ENCODE measurements at regions of chr2 and their contacts with region 1.

Region 1: GRCh38 chr2:200306196-200306930 is at the start of gene SPATS2L:
- DNase-seq: peak in 7 of 9 donors; percentile 12 to 36 (median 22)
- ATAC-seq: peak; percentile 58
- H3K4me3 ChIP-seq: peak within 1 kb of the TSS; percentile 63
- H3K4me3 Mint-ChIP-seq: peak within 1 kb of the TSS; percentile 86 to 96 (median 92)
- H3K27ac ChIP-seq: no peak within 1 kb of the TSS
- H3K27ac Mint-ChIP-seq: peak within 1 kb of the TSS in 7 of 9 donors; percentile 14 to 88 (median 63)
- H3K4me1 ChIP-seq: peaks cover 0 to 4% of the 10 kb centered on the region in 2 donors
- H3K4me1 Mint-ChIP-seq: peaks cover 7 to 32% (median 11%) of the 10 kb centered on the region in 7 donors
- H3K27me3 ChIP-seq: no peaks in the 10 kb centered on the region
- H3K27me3 Mint-ChIP-seq: peaks cover 0 to 58% (median 16%) of the 10 kb centered on the region in 5 donors
- total RNA-seq, gene SPATS2L: 2.3 to 51.9 (median 3.5) TPM

Region 2: DNA sequence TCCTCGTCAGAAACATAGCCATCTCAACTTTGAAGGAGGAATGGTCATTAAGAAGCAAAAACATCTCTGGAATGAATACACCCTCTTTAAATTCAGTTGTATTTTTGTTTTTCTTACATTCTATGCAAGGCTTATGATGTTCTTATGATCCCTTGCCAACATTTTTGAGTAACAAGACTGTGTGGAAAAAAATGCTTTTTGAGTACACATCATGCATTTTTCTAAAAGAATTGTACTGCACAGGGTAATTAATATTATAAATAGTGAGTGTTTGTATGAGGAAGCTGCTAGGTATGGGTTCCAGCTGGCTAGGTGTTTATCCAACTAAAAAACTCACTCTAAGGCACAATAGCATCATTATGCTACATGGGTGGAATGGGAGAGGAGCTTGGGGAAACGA is 58.9 kb before region 1 on chr2:
- CTCF ChIA-PET with region 1: no interaction called
- POLR2A ChIA-PET with region 1: no interaction called
- intact Hi-C with region 1: no loop called
- DNase-seq: no peak
- ATAC-seq: no peak
- H3K4me3 ChIP-seq: no peak overlapping the region
- H3K4me3 Mint-ChIP-seq: no peak overlapping the region
- H3K27ac ChIP-seq: no peak overlapping the region
- H3K27ac Mint-ChIP-seq: no peak overlapping the region
- H3K4me1 ChIP-seq: no peaks in the 10 kb centered on the region
- H3K4me1 Mint-ChIP-seq: peaks cover 0 to 5% (median 0%) of the 10 kb centered on the region in 7 donors
- H3K27me3 ChIP-seq: no peaks in the 10 kb centered on the region
- H3K27me3 Mint-ChIP-seq: peaks cover 0 to 42% (median 4%) of the 10 kb centered on the region in 5 donors

Region 3: GRCh38 chr2:200383383-200384110 is 77.2 kb after region 1 on chr2:
- CTCF ChIA-PET with region 1: no interaction called
- POLR2A ChIA-PET with region 1: no interaction called
- intact Hi-C with region 1: loop called in 1 of 2 experiments (anchors 2 kb)
- DNase-seq: peak in 7 of 9 donors; percentile 14 to 56 (median 40)
- ATAC-seq: peak; percentile 77
- H3K4me3 ChIP-seq: peak overlapping the region; percentile 12
- H3K4me3 Mint-ChIP-seq: peak overlapping the region; percentile 13 to 84 (median 66)
- H3K27ac ChIP-seq: no peak overlapping the region
- H3K27ac Mint-ChIP-seq: peak overlapping the region; percentile 2 to 98 (median 88)
- H3K4me1 ChIP-seq: peaks cover 0 to 6% of the 10 kb centered on the region in 2 donors
- H3K4me1 Mint-ChIP-seq: peaks cover 12 to 58% (median 20%) of the 10 kb centered on the region in 7 donors
- H3K27me3 ChIP-seq: no peaks in the 10 kb centered on the region
- H3K27me3 Mint-ChIP-seq: no peaks in the 10 kb centered on the region

Region 4: DNA sequence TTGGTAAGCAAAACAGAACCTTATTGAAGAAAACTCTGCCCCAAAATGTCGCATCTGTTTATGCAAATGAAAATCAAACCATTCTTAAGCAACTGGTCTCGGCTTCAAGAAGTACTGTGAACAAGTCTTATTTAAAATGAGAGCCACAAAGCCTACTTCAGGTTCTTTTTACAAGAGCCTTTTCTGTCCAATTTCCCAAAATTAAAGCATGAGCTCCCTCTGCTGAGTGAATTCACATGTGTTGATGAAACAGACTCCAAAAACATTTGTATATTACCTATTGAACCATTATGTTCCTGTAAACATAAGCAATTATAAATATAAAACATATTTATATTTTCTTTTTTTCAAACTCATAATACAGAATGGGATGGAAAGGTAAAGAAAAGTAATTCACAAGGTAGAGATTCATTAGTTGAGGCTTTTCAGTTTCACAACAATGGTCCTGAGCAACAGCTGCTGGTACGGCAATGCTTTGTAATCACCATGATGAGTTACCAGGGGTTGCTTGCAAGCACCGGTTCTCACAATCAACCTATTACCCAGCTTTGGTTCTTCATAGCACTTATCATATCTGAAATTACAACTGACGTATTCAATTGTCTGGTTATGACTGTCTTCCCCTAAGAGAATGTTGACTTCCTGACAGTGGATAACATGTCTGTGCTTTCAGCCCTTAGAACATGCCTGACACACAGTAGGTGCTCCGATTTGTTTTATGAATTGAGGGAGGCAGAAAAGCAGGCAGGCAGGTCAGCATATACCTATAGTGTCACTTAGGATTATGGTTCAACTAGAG is 397.0 kb after region 1 on chr2:
- CTCF ChIA-PET with region 1: no interaction called
- POLR2A ChIA-PET with region 1: no interaction called
- intact Hi-C with region 1: loop called in 1 of 2 experiments (anchors 10 kb)
- DNase-seq: peak in 4 of 9 donors; percentile 9 to 35 (median 28)
- ATAC-seq: peak; percentile 6
- H3K4me3 ChIP-seq: no peak overlapping the region
- H3K4me3 Mint-ChIP-seq: peak overlapping the region in 1 of 10 donors; percentile 22
- H3K27ac ChIP-seq: no peak overlapping the region
- H3K27ac Mint-ChIP-seq: peak overlapping the region in 3 of 9 donors; percentile 5 to 68 (median 8)
- H3K4me1 ChIP-seq: no peaks in the 10 kb centered on the region
- H3K4me1 Mint-ChIP-seq: peaks cover 0 to 28% (median 4%) of the 10 kb centered on the region in 7 donors
- H3K27me3 ChIP-seq: no peaks in the 10 kb centered on the region
- H3K27me3 Mint-ChIP-seq: peaks cover 0 to 5% (median 2%) of the 10 kb centered on the region in 5 donors